ENCODE measurements at regions of chr1 and their contacts with region 1.

Region 1: GRCh38 chr1:98267423-98267822 is 346.6 kb upstream of the DPYD start:
- DNase-seq: no peak
- H3K4me3 ChIP-seq: no peak overlapping the region
- H3K27ac ChIP-seq: no peak overlapping the region
- H3K4me1 ChIP-seq: no peaks in the 10 kb centered on the region
- H3K27me3 ChIP-seq: no peaks in the 10 kb centered on the region
- CTCF ChIP-seq: no peak

Region 2: DNA sequence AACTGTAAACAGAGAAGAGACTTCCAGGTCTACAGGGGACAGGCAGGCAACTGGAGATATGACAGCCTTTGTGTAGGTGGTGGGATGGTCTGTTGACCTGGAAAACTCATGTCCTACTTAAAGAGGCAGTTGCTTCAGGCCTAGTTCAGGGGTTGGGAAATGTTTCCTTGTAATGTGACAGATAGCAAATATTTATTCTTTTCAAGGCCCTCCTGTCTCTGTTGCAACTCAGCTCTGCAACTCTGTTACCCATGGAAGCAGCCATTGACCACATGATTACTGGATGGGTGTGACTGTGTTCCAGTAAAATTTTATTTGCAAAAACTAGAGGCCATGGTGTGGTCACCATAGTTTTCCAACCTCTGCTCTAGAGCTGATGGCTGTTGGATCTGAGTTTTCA is 1203.9 kb before region 1 on chr1:
- CTCF ChIA-PET with region 1: no interaction called
- POLR2A ChIA-PET with region 1: interaction called, 15 read pairs
- intact Hi-C with region 1: no loop called
- DNase-seq: no peak
- H3K4me3 ChIP-seq: no peak overlapping the region
- H3K27ac ChIP-seq: no peak overlapping the region
- H3K4me1 ChIP-seq: no peaks in the 10 kb centered on the region
- H3K27me3 ChIP-seq: no peaks in the 10 kb centered on the region
- CTCF ChIP-seq: no peak

Region 3: GRCh38 chr1:98001764-98002163 is 265.7 kb before region 1 on chr1:
- CTCF ChIA-PET with region 1: no interaction called
- POLR2A ChIA-PET with region 1: no interaction called
- intact Hi-C with region 1: no loop called
- DNase-seq: peak; percentile 13
- H3K4me3 ChIP-seq: no peak overlapping the region
- H3K27ac ChIP-seq: no peak overlapping the region
- H3K4me1 ChIP-seq: peaks cover 28% of the 10 kb centered on the region
- H3K27me3 ChIP-seq: no peaks in the 10 kb centered on the region
- CTCF ChIP-seq: peak; percentile 54

Region 4: GRCh38 chr1:98251497-98251896 is 15.9 kb before region 1 on chr1:
- CTCF ChIA-PET with region 1: no interaction called
- POLR2A ChIA-PET with region 1: no interaction called
- intact Hi-C with region 1: no loop called
- DNase-seq: no peak
- H3K4me3 ChIP-seq: no peak overlapping the region
- H3K27ac ChIP-seq: no peak overlapping the region
- H3K4me1 ChIP-seq: peaks cover 7% of the 10 kb centered on the region
- H3K27me3 ChIP-seq: no peaks in the 10 kb centered on the region
- CTCF ChIP-seq: 0 out of 2 replicates have a peak, but pooled peaks have one; percentile 19

Region 5: GRCh38 chr1:98405581-98406059 is 138.2 kb after region 1 on chr1:
- CTCF ChIA-PET with region 1: no interaction called
- POLR2A ChIA-PET with region 1: no interaction called
- intact Hi-C with region 1: no loop called
- DNase-seq: peak; percentile 40
- H3K4me3 ChIP-seq: no peak overlapping the region
- H3K27ac ChIP-seq: peak overlapping the region; percentile 49
- H3K4me1 ChIP-seq: peaks cover 48% of the 10 kb centered on the region
- H3K27me3 ChIP-seq: no peaks in the 10 kb centered on the region
- CTCF ChIP-seq: no peak

Measured in A673 (cell line).